Activated CD4-positive, alpha-beta T cell treated with anti-CD3 and anti-CD28 coated beads, Interleukin-2, amount 10 ng/mL, durations not matched to agents 24 days and 14 days (primary cell): ENCODE measurements at regions of chr13 and their contacts with region 1.

Region 1: DNA sequence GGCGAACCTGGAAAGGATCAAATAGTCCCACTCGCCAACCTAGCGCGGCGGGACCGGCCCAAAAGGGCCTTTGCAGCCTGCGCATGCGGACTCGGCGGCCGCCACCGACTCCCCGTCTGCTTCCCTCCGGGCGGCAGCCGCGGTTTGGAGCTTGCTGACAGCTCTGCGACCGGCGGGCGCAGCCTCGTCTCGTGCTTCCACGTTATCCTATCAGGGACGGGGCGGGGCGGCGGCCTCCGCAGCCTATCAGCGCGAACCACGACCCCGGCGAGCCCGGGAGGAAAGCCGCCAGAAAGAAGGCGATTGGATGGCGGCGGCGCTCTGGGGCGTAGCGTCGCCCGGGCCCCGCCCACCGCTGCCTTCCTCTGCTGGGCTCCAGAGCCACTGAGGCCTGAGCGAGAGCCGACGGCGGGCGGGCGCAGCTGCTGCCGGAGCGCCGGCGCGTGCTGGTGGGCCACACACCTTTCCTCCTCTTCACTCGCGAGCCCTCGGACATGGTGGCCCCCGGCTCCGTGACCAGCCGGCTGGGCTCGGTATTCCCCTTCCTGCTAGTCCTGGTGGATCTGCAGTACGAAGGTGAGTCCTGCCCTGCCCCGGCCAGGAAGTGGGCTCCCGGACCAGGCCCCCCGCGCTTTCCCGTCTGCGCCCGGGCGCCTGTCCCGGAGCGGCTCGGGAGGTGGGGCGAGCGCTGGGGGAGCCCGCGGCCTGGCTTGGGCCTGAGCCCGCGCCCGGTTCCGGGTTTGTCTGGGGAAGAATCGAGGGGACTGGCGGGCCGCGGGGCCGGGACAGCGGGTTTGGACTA is at the start of gene DNAJC3:
- DNase-seq: peak; percentile 100
- H3K4me3 Mint-ChIP-seq: peak within 1 kb of the TSS; percentile 93
- H3K27ac Mint-ChIP-seq: peak within 1 kb of the TSS; percentile 93
- H3K4me1 Mint-ChIP-seq: peaks cover 43% of the 10 kb centered on the region
- H3K27me3 Mint-ChIP-seq: no peaks in the 10 kb centered on the region
- total RNA-seq, gene DNAJC3: 25.2 and 25.6 TPM in 2 replicates

Region 2: GRCh38 chr13:94601446-94602431 is 1075.2 kb before region 1 on chr13 and contains the start of gene GPR180:
- intact Hi-C with region 1: loop called (anchors 5 kb)
- DNase-seq: peak; percentile 97
- H3K4me3 Mint-ChIP-seq: peak within 1 kb of the TSS; percentile 89
- H3K27ac Mint-ChIP-seq: peak within 1 kb of the TSS; percentile 79
- H3K4me1 Mint-ChIP-seq: peaks cover 27% of the 10 kb centered on the region
- H3K27me3 Mint-ChIP-seq: no peaks in the 10 kb centered on the region
- total RNA-seq, gene GPR180: 9.8 and 10.3 TPM in 2 replicates

Region 3: DNA sequence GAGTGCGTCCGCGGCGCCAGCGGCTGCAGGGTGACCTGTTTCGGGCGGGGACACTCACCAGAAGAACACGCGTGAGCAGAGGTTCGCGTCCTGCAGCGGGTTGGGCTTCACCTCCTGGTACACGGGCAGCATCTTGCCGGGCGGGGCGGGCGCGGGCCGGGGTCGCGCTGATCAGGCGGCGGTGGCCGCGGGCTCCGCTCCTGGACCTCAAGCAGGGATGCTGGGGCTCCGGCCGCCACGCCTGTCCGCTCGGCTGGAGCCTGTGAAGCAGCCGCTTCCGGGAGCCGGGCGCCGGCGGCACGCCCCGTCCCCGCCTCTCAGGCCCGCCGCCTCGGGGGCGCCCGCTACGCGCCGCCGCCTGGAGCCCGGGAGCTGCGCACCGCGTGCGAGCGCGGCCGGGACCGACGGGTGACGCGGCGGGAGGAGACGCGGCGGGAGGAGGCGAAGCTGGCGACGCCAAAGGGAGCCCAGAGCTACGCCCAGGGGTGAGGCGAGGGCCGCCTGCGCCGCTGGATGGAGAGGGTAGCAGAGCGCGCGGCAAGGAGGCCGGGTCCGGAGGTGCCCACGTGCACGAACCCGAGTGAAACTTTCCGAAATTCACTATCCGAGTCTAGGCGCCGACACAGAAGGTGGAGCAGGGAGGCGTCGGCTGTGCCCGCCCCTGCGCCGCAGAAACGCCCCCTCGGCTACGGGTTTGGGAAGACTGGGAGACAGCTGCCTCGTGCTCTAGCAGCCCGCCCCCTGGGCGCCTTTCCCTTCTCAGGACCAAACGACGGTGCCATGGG is 375.6 kb before region 1 on chr13 and contains the start of gene ABCC4:
- intact Hi-C with region 1: loop called (anchors 2 kb)
- DNase-seq: peak; percentile 90
- H3K4me3 Mint-ChIP-seq: peak within 1 kb of the TSS; percentile 91
- H3K27ac Mint-ChIP-seq: peak within 1 kb of the TSS; percentile 85
- H3K4me1 Mint-ChIP-seq: peaks cover 28% of the 10 kb centered on the region
- H3K27me3 Mint-ChIP-seq: peaks cover 12% of the 10 kb centered on the region
- total RNA-seq, gene ABCC4: 19.6 and 20.9 TPM in 2 replicates

Region 4: GRCh38 chr13:95644601-95645052 is 32.3 kb before region 1 on chr13 and contains the start of gene DZIP1:
- intact Hi-C with region 1: loop called (anchors 5 kb)
- DNase-seq: peak; percentile 76
- H3K4me3 Mint-ChIP-seq: peak within 1 kb of the TSS; percentile 79
- H3K27ac Mint-ChIP-seq: no peak within 1 kb of the TSS
- H3K4me1 Mint-ChIP-seq: peaks cover 8% of the 10 kb centered on the region
- H3K27me3 Mint-ChIP-seq: peaks cover 55% of the 10 kb centered on the region
- total RNA-seq, gene DZIP1: 0.12 and 0.14 TPM in 2 replicates

Region 5: DNA sequence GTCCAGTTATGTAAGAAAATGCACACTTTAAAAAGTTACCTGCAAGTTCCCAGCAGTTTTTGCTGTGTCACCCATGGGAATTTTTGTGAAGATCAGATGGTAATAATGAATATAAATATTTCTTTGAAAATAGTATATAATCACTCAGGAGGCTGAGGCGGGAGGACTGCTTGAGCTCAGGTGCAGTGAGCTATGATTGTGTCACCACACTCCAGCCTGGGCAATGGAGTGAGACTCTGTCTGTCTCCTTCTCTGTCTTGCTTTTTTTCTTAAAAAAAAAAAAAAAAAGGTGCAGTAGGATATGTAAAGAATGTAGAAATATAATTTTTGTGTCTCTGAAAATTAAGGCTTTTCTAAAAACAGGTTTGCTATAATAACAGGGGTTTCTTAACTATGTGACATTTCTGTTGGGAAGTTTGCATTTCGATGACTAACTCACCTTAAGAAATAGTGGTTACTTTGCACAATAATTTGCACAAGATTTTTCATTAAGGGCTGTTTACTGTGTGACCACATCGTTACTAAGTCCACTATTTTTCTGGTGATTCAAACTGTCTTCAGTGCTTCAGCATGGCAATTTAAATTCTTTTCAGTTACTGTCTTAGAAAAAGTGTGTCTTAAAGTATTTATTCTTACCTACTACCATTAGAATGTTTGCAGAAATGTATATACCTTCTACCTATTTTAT is 37.3 kb after region 1 on chr13:
- intact Hi-C with region 1: loop called (anchors 5 kb)
- DNase-seq: no peak
- H3K4me3 Mint-ChIP-seq: no peak overlapping the region
- H3K27ac Mint-ChIP-seq: no peak overlapping the region
- H3K4me1 Mint-ChIP-seq: no peaks in the 10 kb centered on the region
- H3K27me3 Mint-ChIP-seq: no peaks in the 10 kb centered on the region

Region 6: DNA sequence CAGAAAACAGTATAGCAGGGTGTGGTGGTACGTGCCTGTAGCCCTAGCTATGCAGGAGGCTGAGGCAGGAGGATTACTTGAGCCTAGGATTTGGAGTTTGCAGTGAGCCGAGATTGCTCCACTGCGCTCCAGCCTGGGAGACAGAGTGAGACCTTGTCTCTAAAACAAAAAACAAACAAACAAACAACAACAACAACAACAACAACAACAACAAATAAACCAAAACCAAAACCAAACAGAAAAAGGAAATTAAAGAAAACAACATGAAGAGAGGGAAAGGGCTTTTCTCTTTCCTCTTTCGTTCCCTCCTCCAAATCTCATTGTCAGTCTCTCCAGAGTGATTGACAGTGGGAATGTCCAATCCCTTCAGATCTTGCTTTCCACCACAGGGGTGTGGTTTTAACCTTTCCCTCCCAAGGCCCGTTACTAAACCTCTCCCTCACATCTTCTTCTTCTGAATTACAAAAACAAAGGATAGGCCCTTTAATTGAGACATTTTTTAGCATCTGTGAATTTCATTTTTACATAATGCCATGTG is 754.1 kb after region 1 on chr13:
- intact Hi-C with region 1: no loop called
- DNase-seq: no peak
- H3K4me3 Mint-ChIP-seq: no peak overlapping the region
- H3K27ac Mint-ChIP-seq: no peak overlapping the region
- H3K4me1 Mint-ChIP-seq: no peaks in the 10 kb centered on the region
- H3K27me3 Mint-ChIP-seq: no peaks in the 10 kb centered on the region

Region 7: GRCh38 chr13:97432917-97433726 is 1756.2 kb after region 1 on chr13:
- intact Hi-C with region 1: loop called (anchors 1 kb)
- DNase-seq: peak; percentile 100
- H3K4me3 Mint-ChIP-seq: peak overlapping the region; percentile 94
- H3K27ac Mint-ChIP-seq: peak overlapping the region; percentile 98
- H3K4me1 Mint-ChIP-seq: peaks cover 32% of the 10 kb centered on the region
- H3K27me3 Mint-ChIP-seq: peaks cover 12% of the 10 kb centered on the region